Heart left ventricle (tissue), 16 donors: ENCODE measurements at regions of chr13 and their contacts with region 1.

Region 1: GRCh38 chr13:27620377-27621115 is at the start of gene LNX2:
- DNase-seq: peak; percentile 98 to 99 (median 99)
- ATAC-seq: peak; percentile 98 to 100 (median 98)
- H3K4me3 ChIP-seq: peak within 1 kb of the TSS; percentile 66 to 98 (median 90)
- H3K27ac ChIP-seq: peak within 1 kb of the TSS; percentile 72 to 98 (median 96)
- H3K4me1 ChIP-seq: peaks cover 0 to 48% (median 33%) of the 10 kb centered on the region in 12 donors
- H3K27me3 ChIP-seq: no peaks in the 10 kb centered on the region
- CTCF ChIP-seq: peak in 1 of 12 donors; percentile 3
- POLR2A ChIP-seq: peak in 1 of 2 donors; percentile 96
- total RNA-seq, gene LNX2: 10.7 to 18.7 (median 14.9) TPM

Region 2: DNA sequence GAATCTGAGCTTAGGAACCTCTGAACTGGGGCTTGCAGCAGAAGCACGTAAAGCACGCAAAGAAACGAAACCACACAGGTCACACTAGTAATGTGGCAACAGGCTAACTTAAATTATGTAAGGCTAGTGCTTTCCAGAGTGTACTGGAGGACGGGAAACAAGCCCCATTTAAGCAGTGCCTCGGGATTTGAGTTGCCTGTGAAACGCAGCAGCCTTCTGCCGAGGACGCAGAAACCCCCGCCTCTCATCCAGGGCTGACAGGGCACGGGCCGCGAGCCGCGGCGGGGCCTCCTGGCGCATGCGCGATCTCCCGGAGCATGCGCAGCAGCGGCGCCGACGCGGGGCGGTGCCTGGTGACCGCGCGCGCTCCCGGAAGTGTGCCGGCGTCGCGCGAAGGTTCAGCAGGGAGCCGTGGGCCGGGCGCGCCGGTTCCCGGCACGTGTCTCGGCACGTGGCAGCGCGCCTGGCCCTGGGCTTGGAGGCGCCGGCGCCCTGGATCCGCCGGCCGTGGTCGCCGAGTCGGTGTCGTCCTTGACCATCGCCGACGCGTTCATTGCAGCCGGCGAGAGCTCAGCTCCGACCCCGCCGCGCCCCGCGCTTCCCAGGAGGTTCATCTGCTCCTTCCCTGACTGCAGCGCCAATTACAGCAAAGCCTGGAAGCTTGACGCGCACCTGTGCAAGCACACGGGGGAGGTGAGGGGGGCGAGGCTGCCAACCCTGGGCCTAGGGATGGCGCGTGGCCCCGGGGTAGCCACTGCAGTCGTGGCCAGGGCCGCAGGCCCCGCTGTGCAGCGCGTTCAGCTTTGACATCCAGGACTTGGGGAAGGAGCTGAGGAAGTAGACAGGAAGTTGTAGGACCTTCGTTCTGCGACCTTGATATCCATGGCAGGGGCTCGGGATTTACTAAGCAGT is 196.0 kb before region 1 on chr13 and contains the start of gene GTF3A:
- intact Hi-C with region 1: loop called in 2 of 10 experiments (anchors 10 kb)
- DNase-seq: peak; percentile 86 to 94 (median 89)
- ATAC-seq: peak; percentile 80 to 96 (median 93)
- H3K4me3 ChIP-seq: peak within 1 kb of the TSS; percentile 55 to 94 (median 82)
- H3K27ac ChIP-seq: peak within 1 kb of the TSS; percentile 73 to 96 (median 90)
- H3K4me1 ChIP-seq: peaks cover 5 to 47% (median 34%) of the 10 kb centered on the region in 12 donors
- H3K27me3 ChIP-seq: no peaks in the 10 kb centered on the region
- CTCF ChIP-seq: no peak
- POLR2A ChIP-seq: peak in 1 of 2 donors; percentile 85
- total RNA-seq, gene GTF3A: 138 to 387 (median 181) TPM

Region 3: GRCh38 chr13:27449936-27450828 is 170.4 kb before region 1 on chr13 and contains the start of gene MTIF3:
- intact Hi-C with region 1: loop called in 5 of 10 experiments (anchors 2 to 10 kb)
- DNase-seq: peak; percentile 94 to 97 (median 96)
- ATAC-seq: peak; percentile 81 to 95 (median 92)
- H3K4me3 ChIP-seq: peak within 1 kb of the TSS; percentile 38 to 97 (median 86)
- H3K27ac ChIP-seq: peak within 1 kb of the TSS; percentile 95 to 100 (median 98)
- H3K4me1 ChIP-seq: peaks cover 3 to 53% (median 39%) of the 10 kb centered on the region in 12 donors
- H3K27me3 ChIP-seq: no peaks in the 10 kb centered on the region
- CTCF ChIP-seq: peak in 1 of 12 donors; percentile 14
- POLR2A ChIP-seq: peak in 1 of 2 donors; percentile 56
- total RNA-seq, gene MTIF3: 101 to 252 (median 123) TPM

Region 4: DNA sequence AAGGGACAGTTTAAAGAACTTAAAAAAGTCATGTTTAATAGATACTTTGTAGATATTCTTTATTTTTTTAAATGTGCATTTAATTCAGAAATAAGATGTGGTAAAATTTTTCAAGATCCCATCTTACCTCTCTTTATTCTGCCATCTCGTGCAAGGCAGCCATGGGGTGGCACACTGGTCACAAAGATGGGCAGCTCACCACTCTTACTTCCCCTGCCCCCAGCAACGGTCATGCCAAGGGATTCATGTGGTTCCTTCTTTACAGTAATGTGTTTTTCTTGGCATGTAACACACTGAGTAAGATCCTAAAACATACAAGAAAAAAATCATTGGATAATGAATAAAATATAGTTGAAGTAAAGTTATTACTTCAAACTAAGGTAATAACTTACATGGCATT is 64.4 kb before region 1 on chr13:
- intact Hi-C with region 1: loop called in 1 of 10 experiments (anchors 10 kb)
- DNase-seq: peak in 1 of 5 donors; percentile 25
- ATAC-seq: peak in 2 of 4 donors; percentile 42 to 61
- H3K4me3 ChIP-seq: no peak overlapping the region
- H3K27ac ChIP-seq: no peak overlapping the region
- H3K4me1 ChIP-seq: peaks cover 0 to 14% (median 4%) of the 10 kb centered on the region in 12 donors
- H3K27me3 ChIP-seq: no peaks in the 10 kb centered on the region
- CTCF ChIP-seq: peak in 6 of 12 donors; percentile 22 to 37 (median 26)
- POLR2A ChIP-seq: no peak

Region 5: GRCh38 chr13:27573265-27573664 is 47.3 kb before region 1 on chr13:
- intact Hi-C with region 1: loop called in 3 of 10 experiments (anchors 5 to 10 kb)
- DNase-seq: no peak
- ATAC-seq: no peak
- H3K4me3 ChIP-seq: no peak overlapping the region
- H3K27ac ChIP-seq: no peak overlapping the region
- H3K4me1 ChIP-seq: peaks cover 0 to 7% (median under 1%) of the 10 kb centered on the region in 12 donors
- H3K27me3 ChIP-seq: no peaks in the 10 kb centered on the region
- CTCF ChIP-seq: no peak
- POLR2A ChIP-seq: no peak

Region 6: GRCh38 chr13:27583614-27584031 is 36.9 kb before region 1 on chr13:
- intact Hi-C with region 1: loop called in 1 of 10 experiments (anchors 5 kb)
- DNase-seq: no peak
- ATAC-seq: peak in 3 of 4 donors; percentile 26 to 44 (median 30)
- H3K4me3 ChIP-seq: no peak overlapping the region
- H3K27ac ChIP-seq: peak overlapping the region in 6 of 12 donors; percentile 9 to 56 (median 18)
- H3K4me1 ChIP-seq: peaks cover 0 to 30% (median 17%) of the 10 kb centered on the region in 12 donors
- H3K27me3 ChIP-seq: no peaks in the 10 kb centered on the region
- CTCF ChIP-seq: no peak
- POLR2A ChIP-seq: no peak

Region 7: GRCh38 chr13:27665333-27665732 is 44.8 kb after region 1 on chr13:
- intact Hi-C with region 1: loop called in 1 of 10 experiments (anchors 5 kb)
- DNase-seq: no peak
- ATAC-seq: no peak
- H3K4me3 ChIP-seq: no peak overlapping the region
- H3K27ac ChIP-seq: no peak overlapping the region
- H3K4me1 ChIP-seq: peaks cover 0 to 31% (median 6%) of the 10 kb centered on the region in 12 donors
- H3K27me3 ChIP-seq: no peaks in the 10 kb centered on the region
- CTCF ChIP-seq: peak in 10 of 12 donors; percentile 9 to 45 (median 23)
- POLR2A ChIP-seq: no peak

Region 8: DNA sequence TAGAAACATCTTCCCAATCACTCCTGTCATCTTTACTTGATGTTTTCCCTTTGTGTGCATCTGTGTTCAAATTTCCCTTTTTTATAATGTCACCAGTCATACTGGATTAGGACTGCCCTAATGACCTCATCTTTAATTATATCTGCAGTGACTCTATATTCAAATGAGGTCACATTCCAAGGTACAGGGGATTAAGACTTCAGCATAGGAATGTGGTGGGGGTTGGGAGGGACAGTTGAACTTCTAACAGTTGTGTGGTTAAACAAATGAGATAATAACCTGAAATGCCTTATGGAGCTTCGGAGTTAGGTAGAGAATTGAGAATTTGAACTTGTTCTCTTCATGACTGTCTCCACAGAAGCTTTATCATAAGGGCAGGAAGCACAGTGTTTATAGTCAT is 540.8 kb after region 1 on chr13:
- intact Hi-C with region 1: no loop called
- DNase-seq: no peak
- ATAC-seq: peak in 2 of 4 donors; percentile 36 to 59
- H3K4me3 ChIP-seq: no peak overlapping the region
- H3K27ac ChIP-seq: no peak overlapping the region
- H3K4me1 ChIP-seq: peaks cover 0 to 35% (median 15%) of the 10 kb centered on the region in 12 donors
- H3K27me3 ChIP-seq: no peaks in the 10 kb centered on the region
- CTCF ChIP-seq: no peak
- POLR2A ChIP-seq: no peak

Region 9: DNA sequence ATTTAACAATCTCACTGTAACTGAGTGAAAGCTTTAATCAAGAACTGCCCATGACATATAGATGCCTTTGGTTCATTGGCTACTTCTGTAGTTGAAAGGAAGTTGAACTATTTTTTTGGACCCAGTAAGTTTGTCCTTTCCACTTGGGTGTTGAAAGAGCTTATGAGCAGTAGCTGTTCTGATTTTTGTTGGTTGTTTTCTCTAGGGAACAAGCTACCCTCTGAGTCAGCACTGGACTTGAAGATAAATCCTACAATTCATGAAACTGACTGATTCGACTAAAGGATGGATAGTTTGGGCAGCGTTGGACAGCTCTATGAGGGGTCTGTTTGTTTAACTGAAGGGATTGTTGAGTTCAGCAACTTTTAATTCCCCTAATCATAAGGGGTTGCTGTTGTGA is 618.8 kb after region 1 on chr13:
- intact Hi-C with region 1: no loop called
- DNase-seq: no peak
- ATAC-seq: peak in 2 of 4 donors; percentile 61 to 67
- H3K4me3 ChIP-seq: no peak overlapping the region
- H3K27ac ChIP-seq: no peak overlapping the region
- H3K4me1 ChIP-seq: peaks cover 0 to 4% (median 0%) of the 10 kb centered on the region in 12 donors
- H3K27me3 ChIP-seq: no peaks in the 10 kb centered on the region
- CTCF ChIP-seq: no peak
- POLR2A ChIP-seq: no peak

Region 10: GRCh38 chr13:28918030-28918429 is 1297.5 kb after region 1 on chr13:
- intact Hi-C with region 1: no loop called
- DNase-seq: no peak
- ATAC-seq: no peak
- H3K4me3 ChIP-seq: no peak overlapping the region
- H3K27ac ChIP-seq: no peak overlapping the region
- H3K4me1 ChIP-seq: no peaks in the 10 kb centered on the region
- H3K27me3 ChIP-seq: no peaks in the 10 kb centered on the region
- CTCF ChIP-seq: no peak
- POLR2A ChIP-seq: no peak